Astrocyte of the cerebellum (primary cell): ENCODE measurements at regions of chr5 and their contacts with region 1.

Region 1: DNA sequence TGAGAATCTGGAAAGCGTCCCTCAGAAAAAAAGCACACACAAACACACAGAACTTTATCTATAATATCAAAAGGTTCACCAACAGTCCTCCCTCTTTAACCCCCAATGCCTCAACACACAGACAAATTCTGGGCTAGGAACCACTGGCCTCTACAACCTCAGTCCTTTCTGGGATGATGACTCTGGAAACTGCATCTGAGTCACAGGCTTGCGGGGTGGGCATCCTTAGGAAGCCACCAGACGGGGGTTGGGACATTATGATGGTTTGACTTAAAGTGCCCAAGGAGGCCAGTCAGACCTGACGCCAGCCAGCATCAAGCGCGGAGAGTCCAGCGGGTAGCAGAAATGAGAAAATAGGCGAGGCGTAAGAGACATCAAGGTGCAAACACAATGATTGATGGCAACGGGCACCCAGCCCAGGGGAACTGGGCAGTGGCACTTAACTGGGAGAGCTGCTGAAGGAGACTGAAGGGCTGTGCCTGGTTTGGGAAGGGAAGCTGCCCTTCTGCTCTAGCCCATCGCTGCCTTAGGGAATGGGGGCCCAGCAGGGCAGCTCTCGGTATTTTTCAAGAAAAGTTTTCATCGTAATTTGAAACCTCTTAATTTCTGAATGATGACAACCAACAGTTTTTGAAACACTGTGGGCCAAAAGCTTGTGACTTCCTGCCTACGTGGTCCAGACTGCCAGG is 20.7 kb downstream of the SPRY4 start:
- DNase-seq: no peak
- H3K4me3 ChIP-seq: no peak overlapping the region
- CTCF ChIP-seq: no peak

Region 2: GRCh38 chr5:142235055-142235797 is 68.9 kb before region 1 on chr5:
- in situ Hi-C with region 1: no loop called
- DNase-seq: no peak
- H3K4me3 ChIP-seq: no peak overlapping the region
- CTCF ChIP-seq: no peak

Region 3: DNA sequence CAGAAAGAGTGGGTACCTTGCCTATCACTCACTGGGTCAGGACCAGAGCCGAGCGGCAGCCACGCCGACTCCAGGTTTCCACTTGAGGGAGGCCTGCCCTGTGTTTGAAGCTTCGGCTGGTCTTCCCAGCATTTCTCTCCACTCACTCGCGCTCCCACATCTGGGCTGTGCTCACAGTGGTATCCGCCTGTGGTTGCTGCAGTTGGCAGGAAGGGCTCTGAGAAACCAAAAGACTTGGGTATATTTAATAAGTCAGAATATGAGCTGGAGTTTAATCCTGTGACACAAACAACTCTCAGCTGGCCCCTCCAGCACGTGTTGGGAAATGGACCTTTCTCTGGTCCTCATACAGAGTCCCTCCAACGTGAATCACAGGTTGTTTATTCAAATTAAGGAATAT is 50.2 kb before region 1 on chr5:
- in situ Hi-C with region 1: loop called (anchors 5 kb)
- DNase-seq: peak; percentile 16
- H3K4me3 ChIP-seq: no peak overlapping the region
- CTCF ChIP-seq: no peak